ENCODE measurements at regions of chr20 and their contacts with region 1.

Region 1: GRCh38 chr20:58236612-58237330 is 8.3 kb upstream of the ANKRD60 start:
- DNase-seq: peak in 1 of 2 donors; percentile 85
- H3K4me3 ChIP-seq: peak overlapping the region; percentile 49 to 58
- H3K27ac ChIP-seq: peak overlapping the region; percentile 14 to 45
- H3K4me1 ChIP-seq: peaks cover 0 to 2% of the 10 kb centered on the region in 2 donors
- H3K27me3 ChIP-seq: no peaks in the 10 kb centered on the region
- CTCF ChIP-seq: peak; percentile 84 to 94 (median 94)

Region 2: GRCh38 chr20:58447511-58448391 is 211.0 kb after region 1 on chr20:
- intact Hi-C with region 1: loop called (anchors 10 kb)
- DNase-seq: no peak
- H3K4me3 ChIP-seq: no peak overlapping the region
- H3K27ac ChIP-seq: no peak overlapping the region
- H3K4me1 ChIP-seq: no peaks in the 10 kb centered on the region
- H3K27me3 ChIP-seq: no peaks in the 10 kb centered on the region
- CTCF ChIP-seq: peak; percentile 7 to 44 (median 12)

Region 3: GRCh38 chr20:58584881-58585752 is 348.3 kb after region 1 on chr20:
- intact Hi-C with region 1: no loop called
- DNase-seq: peak in 1 of 2 donors; percentile 13
- H3K4me3 ChIP-seq: no peak overlapping the region
- H3K27ac ChIP-seq: no peak overlapping the region
- H3K4me1 ChIP-seq: no peaks in the 10 kb centered on the region
- H3K27me3 ChIP-seq: no peaks in the 10 kb centered on the region
- CTCF ChIP-seq: no peak

Region 4: DNA sequence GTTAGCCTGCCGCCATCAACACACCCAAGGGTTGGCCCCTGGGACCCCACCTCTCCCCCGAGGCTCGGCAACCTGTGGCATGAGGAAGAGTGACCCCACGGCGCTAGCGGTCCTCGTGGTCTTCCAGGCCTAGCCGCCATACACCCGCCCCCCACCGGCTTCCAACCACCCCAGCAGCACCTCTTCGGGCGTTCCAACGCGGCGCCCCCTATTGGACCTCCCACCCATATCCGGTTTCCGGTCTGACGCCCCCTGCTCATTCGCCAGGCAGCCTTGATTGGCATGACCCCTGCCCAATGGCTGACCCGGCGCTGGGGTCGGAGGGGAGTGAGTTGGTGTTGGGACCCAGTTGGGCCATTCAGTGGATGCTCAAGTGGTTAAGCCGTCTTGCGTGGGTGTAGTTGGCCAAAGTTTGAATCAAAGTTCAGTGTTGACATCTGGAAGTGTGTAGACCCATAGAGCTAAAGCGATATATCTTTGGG is 614.0 kb after region 1 on chr20 and contains the start of gene GNAS-AS1:
- intact Hi-C with region 1: loop called (anchors 10 kb)
- DNase-seq: peak in 1 of 2 donors; percentile 75
- H3K4me3 ChIP-seq: peak within 1 kb of the TSS; percentile 39 to 65
- H3K27ac ChIP-seq: no peak within 1 kb of the TSS
- H3K4me1 ChIP-seq: peaks cover 0 to 5% of the 10 kb centered on the region in 2 donors
- H3K27me3 ChIP-seq: peaks cover 3% of the 10 kb centered on the region
- CTCF ChIP-seq: peak in 1 of 3 experiments; percentile 13
- total RNA-seq, gene GNAS-AS1: not detected

Measured in ascending aorta (tissue), 2 donors.